ENCODE measurements at regions of chr16 and their contacts with region 1.

Region 1: GRCh38 chr16:84785843-84786581 is 33.8 kb upstream of the CRISPLD2 start:
- DNase-seq: peak; percentile 79
- H3K4me3 ChIP-seq: no peak overlapping the region
- H3K27ac ChIP-seq: peak overlapping the region in 1 of 2 experiments; percentile 63; a peak in 2 of 4 replicates
- H3K4me1 ChIP-seq: peaks cover 6 to 41% of the 10 kb centered on the region in 2 experiments; a peak in 3 of 4 replicates
- H3K27me3 ChIP-seq: no peaks in the 10 kb centered on the region
- CTCF ChIP-seq: no peak
- EP300 ChIP-seq: peak; percentile 13 to 36; a peak in 1 of 4 replicates
- RAD21 ChIP-seq: peak; percentile 12; the same call in 1 of the 2 replicates

Region 2: GRCh38 chr16:84774810-84775209 is 11.2 kb before region 1 on chr16:
- CTCF ChIA-PET with region 1: interaction called, 10 read pairs
- POLR2A ChIA-PET with region 1: no interaction called
- DNase-seq: no peak
- H3K4me3 ChIP-seq: no peak overlapping the region
- H3K27ac ChIP-seq: no peak overlapping the region
- H3K4me1 ChIP-seq: no peaks in the 10 kb centered on the region
- H3K27me3 ChIP-seq: no peaks in the 10 kb centered on the region
- CTCF ChIP-seq: no peak
- EP300 ChIP-seq: no peak
- RAD21 ChIP-seq: no peak

Measured in SK-N-SH (cell line).